ENCODE measurements at regions of chr16 and their contacts with region 1.

Region 1: DNA sequence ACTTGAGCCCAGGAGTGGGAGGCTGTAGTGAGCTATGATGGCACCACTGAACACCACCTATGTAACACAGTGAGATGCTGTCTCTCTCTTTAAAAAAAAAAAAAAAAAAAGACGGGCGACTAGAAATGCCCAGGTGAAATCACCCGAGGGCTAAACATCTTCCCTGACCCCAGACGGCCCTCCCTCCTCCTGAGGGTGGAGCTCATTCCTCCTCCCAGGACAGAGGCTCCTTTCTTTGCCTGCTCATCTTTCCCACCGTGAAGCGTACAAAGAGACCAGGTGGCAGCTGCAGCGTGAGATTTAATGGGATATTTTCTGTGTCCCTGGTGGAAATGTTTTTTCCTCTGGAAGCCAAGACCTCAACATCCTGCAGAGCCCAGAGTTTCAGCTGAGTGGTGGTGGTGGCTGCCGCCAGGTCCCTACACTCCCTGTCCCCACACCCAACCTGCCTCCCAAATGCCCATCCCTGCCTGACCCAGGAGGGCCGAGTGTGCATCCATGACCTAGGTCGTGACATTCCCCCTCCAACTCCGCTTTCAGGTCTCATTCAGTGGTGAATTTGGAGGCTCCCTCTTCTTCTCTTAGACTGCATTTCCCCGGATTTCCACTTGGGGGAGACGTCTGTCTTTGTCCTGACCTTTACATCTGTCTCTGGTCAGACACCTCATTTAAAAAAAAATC is 14.4 kb upstream of the GPRC5B start:
- DNase-seq: peak; percentile 50 to 61
- H3K4me3 ChIP-seq: no peak overlapping the region
- H3K27ac ChIP-seq: no peak overlapping the region
- H3K4me1 ChIP-seq: no peaks in the 10 kb centered on the region
- H3K27me3 ChIP-seq: peaks cover 27% of the 10 kb centered on the region
- CTCF ChIP-seq: peak; percentile 85

Region 2: DNA sequence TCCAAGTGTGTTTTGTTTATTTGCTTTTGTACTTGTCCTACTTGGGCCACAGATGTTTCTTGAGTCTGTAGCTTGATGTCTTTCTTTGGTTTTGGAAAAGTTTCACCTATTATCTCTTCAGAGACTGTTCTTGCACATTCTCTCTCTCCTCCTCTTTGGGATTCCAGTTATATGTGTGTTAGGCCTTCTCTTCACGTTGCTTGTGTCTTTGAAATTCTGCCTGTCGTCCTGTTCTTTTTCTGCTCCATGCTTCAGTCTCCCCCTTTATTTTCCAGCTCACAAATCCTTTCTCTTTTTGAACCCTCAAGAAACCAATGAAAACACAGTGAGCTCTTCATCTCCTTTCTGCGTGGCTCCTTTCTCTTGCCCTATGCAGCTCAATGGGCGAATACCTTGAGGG is 335.7 kb before region 1 on chr16:
- CTCF ChIA-PET with region 1: interaction called, 10 read pairs
- POLR2A ChIA-PET with region 1: no interaction called
- intact Hi-C with region 1: no loop called
- DNase-seq: no peak
- H3K4me3 ChIP-seq: no peak overlapping the region
- H3K27ac ChIP-seq: no peak overlapping the region
- H3K4me1 ChIP-seq: no peaks in the 10 kb centered on the region
- H3K27me3 ChIP-seq: no peaks in the 10 kb centered on the region
- CTCF ChIP-seq: no peak

Region 3: DNA sequence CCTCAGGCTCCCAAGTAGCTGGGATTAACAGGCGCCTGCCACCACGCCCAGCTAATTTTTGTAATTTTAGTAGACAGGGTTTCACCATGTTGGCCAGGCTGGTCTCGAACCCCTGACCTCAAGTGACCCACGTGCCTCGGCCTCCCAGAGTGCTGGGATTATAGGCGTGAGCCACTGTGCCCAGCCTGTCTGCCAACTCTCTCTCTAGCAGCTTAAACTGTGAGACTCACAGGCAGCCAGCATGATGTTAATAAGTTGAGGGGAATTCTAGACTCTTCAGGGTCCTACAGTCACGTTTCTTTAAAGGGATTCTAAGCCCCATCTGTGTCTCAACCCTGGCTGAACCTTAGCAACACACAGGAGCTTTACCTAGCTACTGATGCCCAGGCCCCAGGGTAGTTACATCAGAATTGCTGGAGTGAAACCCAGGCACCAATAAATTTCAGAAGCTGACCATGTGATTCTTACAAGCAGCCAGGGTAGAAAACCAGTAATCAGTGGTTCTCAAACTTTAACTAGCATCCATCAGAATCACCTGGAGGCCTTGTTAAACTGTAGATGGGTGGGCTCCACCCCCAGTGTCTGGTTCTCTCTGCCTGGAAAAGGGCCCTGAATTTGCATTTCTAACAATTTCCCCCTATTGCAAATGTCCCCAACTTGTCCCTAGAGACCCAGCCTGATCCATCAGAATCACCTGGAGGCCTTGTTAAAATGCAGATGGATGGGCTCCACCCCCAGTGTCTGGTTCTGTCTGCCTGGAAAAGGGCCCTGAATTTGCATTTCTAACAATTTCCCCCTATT is 45.1 kb before region 1 on chr16:
- CTCF ChIA-PET with region 1: no interaction called
- POLR2A ChIA-PET with region 1: no interaction called
- intact Hi-C with region 1: no loop called
- DNase-seq: no peak
- H3K4me3 ChIP-seq: no peak overlapping the region
- H3K27ac ChIP-seq: no peak overlapping the region
- H3K4me1 ChIP-seq: no peaks in the 10 kb centered on the region
- H3K27me3 ChIP-seq: no peaks in the 10 kb centered on the region
- CTCF ChIP-seq: no peak

Measured in PC-9 (cell line).